A673 (cell line): ENCODE measurements at regions of chr18 and their contacts with region 1.

Region 1: GRCh38 chr18:49412679-49413078 is 47.8 kb downstream of the DYM start:
- DNase-seq: no peak
- H3K4me3 ChIP-seq: no peak overlapping the region
- H3K27ac ChIP-seq: no peak overlapping the region
- H3K4me1 ChIP-seq: peaks cover 13% of the 10 kb centered on the region
- H3K27me3 ChIP-seq: no peaks in the 10 kb centered on the region
- CTCF ChIP-seq: no peak

Region 2: DNA sequence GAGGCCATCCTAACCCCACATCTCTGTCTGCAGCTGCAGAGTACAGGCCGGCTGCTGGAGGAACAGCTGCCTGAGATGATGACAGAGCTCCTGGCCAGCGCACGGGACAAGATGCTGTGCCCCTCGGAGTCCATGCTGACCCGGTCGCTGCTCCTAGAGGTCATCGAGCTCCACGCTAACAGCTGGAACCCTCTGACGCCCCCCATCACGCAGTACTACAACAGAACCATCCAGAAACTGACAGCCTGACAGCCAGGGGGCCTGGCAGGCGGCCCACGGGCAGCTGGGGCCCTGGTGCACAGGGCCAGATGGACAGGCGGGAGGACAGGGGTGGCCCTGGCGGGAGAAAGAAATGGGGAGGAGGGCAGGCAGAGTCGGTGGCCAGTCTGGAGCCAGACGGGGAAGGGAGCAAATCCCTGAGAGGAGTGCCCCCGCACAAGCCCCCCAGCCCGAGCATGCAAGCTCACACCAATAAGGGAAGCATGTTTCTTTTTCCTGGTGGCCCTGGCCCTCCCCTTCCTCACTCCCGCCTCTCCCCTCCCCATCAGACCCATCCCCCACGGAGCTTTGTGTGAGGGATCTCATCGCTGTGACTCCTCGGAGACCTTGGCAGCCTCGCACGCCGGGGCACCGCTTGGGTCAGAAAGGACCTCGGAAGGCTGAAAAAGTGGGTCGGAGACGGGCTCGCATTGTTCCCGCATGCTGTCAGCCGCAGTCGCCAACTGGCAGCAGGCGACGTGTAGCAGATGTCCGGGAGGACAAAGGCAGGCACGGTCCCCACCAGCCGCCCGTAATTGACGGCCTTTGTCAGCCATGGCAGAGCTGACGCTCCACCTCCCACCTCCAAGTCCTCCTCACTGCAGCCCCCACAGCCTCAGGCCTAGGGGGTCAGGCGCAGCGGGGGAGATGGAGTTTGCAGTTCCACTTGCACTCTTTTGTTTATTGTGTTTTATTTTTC is 553.1 kb before region 1 on chr18:
- CTCF ChIA-PET with region 1: no interaction called
- POLR2A ChIA-PET with region 1: interaction called, 18 read pairs
- intact Hi-C with region 1: no loop called
- DNase-seq: peak; percentile 49
- H3K4me3 ChIP-seq: no peak overlapping the region
- H3K27ac ChIP-seq: peak overlapping the region; percentile 66
- H3K4me1 ChIP-seq: peaks cover 21% of the 10 kb centered on the region
- H3K27me3 ChIP-seq: no peaks in the 10 kb centered on the region
- CTCF ChIP-seq: no peak

Region 3: DNA sequence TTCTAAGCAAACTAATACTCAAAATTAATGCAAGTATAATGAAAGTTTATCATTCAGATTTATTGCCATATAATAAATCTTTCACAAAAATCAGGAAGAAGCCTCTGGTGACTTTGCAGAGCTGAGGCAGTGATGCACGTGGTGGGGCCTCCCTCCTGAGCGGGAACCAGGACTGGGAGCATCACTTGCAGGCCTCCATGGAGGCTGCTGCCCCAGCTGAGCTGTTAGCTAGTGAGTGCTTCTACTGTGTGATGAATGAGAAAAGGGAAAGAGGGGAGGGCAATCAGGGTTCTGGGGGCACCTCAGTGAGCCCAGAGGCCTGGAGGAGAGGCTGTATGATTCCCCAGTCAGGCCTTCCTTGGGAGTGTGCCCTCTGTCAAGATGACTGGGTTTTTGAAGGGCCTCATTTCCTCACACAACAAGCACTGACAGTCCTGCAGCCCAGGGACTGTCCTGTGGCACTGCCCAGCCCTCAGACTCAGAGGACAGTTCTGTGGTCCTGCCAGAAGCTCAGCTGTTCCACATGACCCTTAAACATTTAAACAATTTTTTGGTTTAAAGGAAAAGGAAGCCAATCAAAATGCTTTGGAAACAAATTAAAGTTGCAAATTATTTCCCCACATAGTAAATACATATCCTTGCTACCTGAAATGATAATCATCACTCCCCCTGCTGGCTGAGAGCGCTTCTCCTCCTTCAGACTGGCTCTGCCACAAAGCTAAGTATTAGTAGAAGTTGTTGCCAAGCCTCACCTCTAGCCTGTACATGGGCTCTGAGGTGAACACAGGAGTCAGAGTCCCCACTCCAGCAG is 371.0 kb before region 1 on chr18:
- CTCF ChIA-PET with region 1: no interaction called
- POLR2A ChIA-PET with region 1: no interaction called
- intact Hi-C with region 1: loop called (anchors 10 kb)
- DNase-seq: peak; percentile 49
- H3K4me3 ChIP-seq: no peak overlapping the region
- H3K27ac ChIP-seq: no peak overlapping the region
- H3K4me1 ChIP-seq: no peaks in the 10 kb centered on the region
- H3K27me3 ChIP-seq: no peaks in the 10 kb centered on the region
- CTCF ChIP-seq: peak; percentile 68

Region 4: DNA sequence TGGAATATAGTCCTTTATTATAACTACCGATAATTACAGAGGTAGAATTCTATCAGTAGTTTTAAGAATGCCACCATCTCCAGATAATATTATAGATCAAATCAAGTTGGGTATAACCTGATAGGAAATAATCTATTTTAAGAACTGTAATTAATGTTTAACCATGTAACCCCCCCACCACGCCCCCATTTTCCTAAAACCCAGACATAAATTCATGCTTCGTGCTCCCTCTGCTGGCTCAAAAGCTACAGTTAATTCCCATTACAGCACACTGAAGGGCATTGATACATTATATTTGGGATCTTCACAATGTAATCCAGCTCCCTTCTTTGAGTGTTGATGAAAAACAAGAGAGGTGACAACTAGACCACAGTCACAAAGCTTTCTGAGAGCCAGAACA is 233.9 kb before region 1 on chr18:
- CTCF ChIA-PET with region 1: interaction called, 4 read pairs
- POLR2A ChIA-PET with region 1: interaction called, 12 read pairs
- intact Hi-C with region 1: no loop called
- DNase-seq: peak; percentile 35
- H3K4me3 ChIP-seq: no peak overlapping the region
- H3K27ac ChIP-seq: no peak overlapping the region
- H3K4me1 ChIP-seq: peaks cover 13% of the 10 kb centered on the region
- H3K27me3 ChIP-seq: no peaks in the 10 kb centered on the region
- CTCF ChIP-seq: peak; percentile 72

Region 5: DNA sequence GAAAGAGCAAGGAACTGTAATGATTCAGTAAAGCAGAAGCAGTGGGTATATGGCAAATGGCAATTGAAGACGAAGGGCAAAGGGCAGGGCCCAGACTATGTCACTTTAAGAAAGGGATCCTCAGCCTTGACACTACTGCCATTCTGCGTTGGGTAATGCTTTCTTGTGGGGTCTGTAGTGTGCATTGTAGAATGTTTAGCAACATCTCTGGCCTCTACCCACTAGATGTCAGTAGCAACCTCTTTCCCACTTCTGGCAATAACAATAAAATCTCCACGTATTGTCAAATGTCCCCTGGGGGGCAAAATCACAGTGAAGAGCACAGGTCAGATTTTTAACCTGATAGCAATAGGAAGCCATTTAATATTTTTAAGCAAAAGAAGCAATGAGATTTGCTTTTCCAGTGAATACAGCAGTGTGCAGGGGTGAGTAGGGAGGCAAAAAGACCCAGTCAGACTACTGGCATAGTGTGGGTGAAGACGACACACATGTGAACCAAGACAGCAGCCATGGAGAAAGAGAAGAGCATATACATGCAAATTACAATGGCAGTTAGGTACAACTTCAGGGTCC is 161.8 kb before region 1 on chr18:
- CTCF ChIA-PET with region 1: no interaction called
- POLR2A ChIA-PET with region 1: no interaction called
- intact Hi-C with region 1: loop called (anchors 2 kb)
- DNase-seq: peak; percentile 60
- H3K4me3 ChIP-seq: no peak overlapping the region
- H3K27ac ChIP-seq: no peak overlapping the region
- H3K4me1 ChIP-seq: peaks cover 34% of the 10 kb centered on the region
- H3K27me3 ChIP-seq: no peaks in the 10 kb centered on the region
- CTCF ChIP-seq: peak; percentile 69

Region 6: DNA sequence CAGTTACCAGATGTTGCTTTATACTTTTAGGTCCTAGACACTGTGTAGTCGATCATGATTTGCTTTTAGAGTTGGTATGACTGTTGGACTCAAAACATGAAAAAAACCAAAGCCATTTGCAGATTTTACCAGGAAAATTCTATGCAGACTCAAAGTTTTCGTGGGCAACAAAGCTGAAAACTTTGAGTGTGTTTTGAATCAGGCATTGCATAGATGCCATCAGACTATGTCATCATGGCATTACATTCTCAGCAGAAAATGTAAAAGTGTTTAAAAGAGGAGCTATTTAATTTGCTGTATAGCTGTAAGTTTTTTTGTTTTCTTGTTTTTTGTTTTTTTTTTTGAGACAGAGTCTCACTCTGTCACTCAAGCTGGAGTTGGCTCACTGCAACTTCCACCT is 1511.7 kb after region 1 on chr18:
- CTCF ChIA-PET with region 1: no interaction called
- POLR2A ChIA-PET with region 1: no interaction called
- intact Hi-C with region 1: no loop called
- DNase-seq: no peak
- H3K4me3 ChIP-seq: no peak overlapping the region
- H3K27ac ChIP-seq: no peak overlapping the region
- H3K4me1 ChIP-seq: no peaks in the 10 kb centered on the region
- H3K27me3 ChIP-seq: no peaks in the 10 kb centered on the region
- CTCF ChIP-seq: no peak